ENCODE measurements at regions of chr17 and their contacts with region 1.

Region 1: GRCh38 chr17:20992987-20993862 is 49.6 kb downstream of the USP22 start:
- DNase-seq: no peak
- ATAC-seq: peak; percentile 44 to 46

Region 2: DNA sequence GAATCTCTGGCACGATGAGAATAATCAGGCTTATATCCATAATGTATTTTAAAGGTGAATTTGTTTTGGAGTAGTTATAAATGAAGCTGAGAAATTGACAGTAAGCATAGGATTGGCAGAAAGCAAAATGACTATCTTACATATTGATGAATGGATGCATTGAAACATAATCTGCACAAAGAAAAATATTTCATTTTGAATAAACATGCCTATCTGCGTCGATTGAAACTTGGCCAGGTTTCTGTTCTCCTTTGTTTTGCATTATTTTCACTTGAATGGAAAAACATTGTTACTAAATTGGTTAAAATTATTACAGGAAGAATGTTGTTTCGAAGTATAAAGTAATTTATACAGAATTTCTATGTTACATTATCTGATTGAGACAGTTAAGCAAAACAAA is 78.6 kb before region 1 on chr17:
- intact Hi-C with region 1: loop called in 1 of 2 experiments (anchors 5 kb)
- DNase-seq: no peak
- ATAC-seq: no peak

Region 3: GRCh38 chr17:21043286-21044232 is 50.3 kb after region 1 on chr17:
- intact Hi-C with region 1: no loop called
- DNase-seq: peak; percentile 99
- ATAC-seq: peak; percentile 93 to 94

Measured in left cardiac atrium (tissue), 4 donors.